ENCODE measurements at regions of chr12 and their contacts with region 1.

Region 1: DNA sequence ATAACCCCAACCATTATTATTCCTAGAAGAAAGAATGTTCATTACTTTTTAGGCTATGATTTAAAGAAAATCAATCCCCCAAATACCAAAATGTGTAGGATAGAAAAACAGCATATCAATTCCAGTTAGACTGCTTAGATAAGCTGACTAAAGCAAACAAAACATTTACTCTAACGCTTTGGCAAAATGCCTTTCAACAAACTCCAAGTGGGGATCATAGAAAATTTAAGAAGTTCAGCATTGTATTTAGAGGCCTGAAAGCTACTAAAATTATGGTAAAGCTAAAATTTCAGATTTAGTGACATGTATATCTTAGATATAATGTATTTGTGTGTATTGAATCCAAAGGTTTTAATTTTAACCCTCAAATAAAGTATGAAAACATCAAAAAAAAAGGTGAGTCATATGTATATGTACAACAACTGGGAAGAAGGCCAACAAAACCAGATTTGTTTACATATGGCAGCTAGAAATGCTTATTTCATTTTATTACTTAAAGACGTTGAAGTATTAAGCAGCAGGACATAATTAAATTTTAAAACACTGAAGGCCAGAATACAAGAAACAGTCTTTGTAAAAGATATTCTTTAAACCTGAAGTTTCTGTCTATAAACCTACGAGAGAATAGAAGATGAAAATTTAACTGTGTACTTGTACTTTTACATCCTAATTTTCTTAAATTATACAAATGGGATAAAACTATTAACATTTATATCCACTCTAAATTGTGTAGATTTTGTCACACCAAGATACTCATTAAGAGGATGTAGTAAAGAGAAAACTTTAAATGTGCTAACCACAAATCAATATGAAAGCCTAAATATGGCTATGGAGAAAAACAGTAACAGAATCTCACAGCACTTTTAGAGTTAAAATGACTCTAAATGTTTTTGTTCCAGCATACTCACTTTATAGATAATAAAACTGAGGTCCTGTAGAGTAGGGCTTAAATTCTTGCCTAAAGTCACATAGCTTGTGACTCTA is 71.4 kb downstream of the SLC41A2 start:
- DNase-seq: no peak
- H3K4me3 ChIP-seq: no peak overlapping the region
- H3K27ac ChIP-seq: no peak overlapping the region
- H3K4me1 ChIP-seq: no peaks in the 10 kb centered on the region
- H3K27me3 ChIP-seq: no peaks in the 10 kb centered on the region
- CTCF ChIP-seq: no peak
- POLR2A ChIP-seq: no peak

Region 2: DNA sequence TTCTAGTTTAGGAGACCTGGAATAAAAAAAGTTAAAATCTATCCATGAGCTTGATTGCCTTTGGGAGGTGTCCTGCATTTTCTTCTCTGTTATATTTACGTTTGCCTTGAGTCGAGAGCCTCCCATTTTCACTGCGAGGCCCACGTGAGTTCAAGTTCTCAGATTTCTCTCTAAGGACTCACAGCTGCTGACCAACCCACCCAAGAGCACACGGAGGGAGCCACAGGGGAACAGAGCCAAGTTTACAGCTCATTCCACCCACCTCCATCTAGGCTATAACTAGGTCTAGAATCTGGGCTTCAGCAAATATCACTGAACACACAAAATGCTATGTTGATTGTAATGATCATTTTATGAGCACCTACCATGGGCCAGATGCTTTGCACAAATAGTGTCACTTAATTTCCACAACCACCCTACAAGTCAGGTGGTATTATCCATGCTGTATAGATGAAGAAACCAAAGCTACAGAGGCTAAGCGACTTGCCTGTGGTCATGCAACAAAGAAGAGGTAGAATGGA is 180.9 kb after region 1 on chr12:
- intact Hi-C with region 1: loop called in 1 of 2 experiments (anchors 10 kb)
- DNase-seq: no peak
- H3K4me3 ChIP-seq: no peak overlapping the region
- H3K27ac ChIP-seq: no peak overlapping the region
- H3K4me1 ChIP-seq: no peaks in the 10 kb centered on the region
- H3K27me3 ChIP-seq: no peaks in the 10 kb centered on the region
- CTCF ChIP-seq: no peak
- POLR2A ChIP-seq: no peak